Ascending aorta (tissue), 2 donors: ENCODE measurements at regions of chr6 and their contacts with region 1.

Region 1: GRCh38 chr6:3356056-3356761 is 97.5 kb downstream of the PSMG4 start:
- DNase-seq: peak; percentile 27 to 88
- H3K4me3 ChIP-seq: peak overlapping the region; percentile 37 to 59
- H3K27ac ChIP-seq: peak overlapping the region; percentile 86 to 89
- H3K4me1 ChIP-seq: peaks cover 3 to 7% of the 10 kb centered on the region in 2 donors
- H3K27me3 ChIP-seq: no peaks in the 10 kb centered on the region
- CTCF ChIP-seq: no peak

Region 2: DNA sequence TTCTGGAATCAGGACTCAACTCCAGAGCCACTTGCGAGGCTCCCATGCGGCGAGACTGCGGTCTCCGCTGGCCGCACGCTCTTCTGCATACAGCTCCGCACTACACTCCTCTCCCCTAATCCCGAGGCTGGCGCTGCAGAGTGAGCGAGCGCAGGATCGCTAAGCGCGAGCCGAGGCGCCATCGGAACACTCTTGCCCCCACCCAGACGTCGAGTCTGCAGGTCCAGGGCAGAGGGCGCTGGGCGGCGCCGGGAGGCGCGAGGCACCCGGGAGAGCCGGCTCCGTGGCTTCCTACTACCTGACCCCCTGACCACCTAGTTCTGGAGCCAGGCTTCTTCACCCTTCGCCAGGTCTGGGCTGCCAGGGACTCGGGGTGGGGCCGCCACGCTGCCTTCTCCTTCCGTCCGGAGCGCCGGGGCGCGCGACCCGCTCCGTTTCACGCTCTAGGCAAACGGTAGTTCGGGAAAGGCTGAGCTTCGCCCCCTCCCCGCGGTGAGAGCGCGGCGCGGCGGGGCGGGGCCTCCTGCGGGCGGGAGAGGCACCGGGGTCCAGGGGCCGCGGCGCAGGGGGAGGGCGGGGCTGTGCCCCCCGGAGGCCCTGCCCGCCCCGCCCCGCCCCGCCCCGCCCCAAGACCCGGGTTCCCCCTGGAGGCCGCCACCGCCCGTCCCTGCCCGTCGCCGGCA is 193.5 kb before region 1 on chr6:
- intact Hi-C with region 1: loop called (anchors 10 kb)
- DNase-seq: peak in 1 of 2 donors; percentile 84
- H3K4me3 ChIP-seq: peak overlapping the region; percentile 84 to 92
- H3K27ac ChIP-seq: peak overlapping the region; percentile 90 to 95
- H3K4me1 ChIP-seq: peaks cover 0 to 4% of the 10 kb centered on the region in 2 donors
- H3K27me3 ChIP-seq: no peaks in the 10 kb centered on the region
- CTCF ChIP-seq: peak in 2 of 3 experiments; percentile 4 to 37

Region 3: GRCh38 chr6:3222506-3223038 is 133.6 kb before region 1 on chr6:
- intact Hi-C with region 1: no loop called
- DNase-seq: no peak
- H3K4me3 ChIP-seq: no peak overlapping the region
- H3K27ac ChIP-seq: no peak overlapping the region
- H3K4me1 ChIP-seq: peaks cover 5 to 9% of the 10 kb centered on the region in 2 donors
- H3K27me3 ChIP-seq: no peaks in the 10 kb centered on the region
- CTCF ChIP-seq: no peak